Heart right ventricle (tissue), 16 donors: ENCODE measurements at regions of chr7 and their contacts with region 1.

Region 1: DNA sequence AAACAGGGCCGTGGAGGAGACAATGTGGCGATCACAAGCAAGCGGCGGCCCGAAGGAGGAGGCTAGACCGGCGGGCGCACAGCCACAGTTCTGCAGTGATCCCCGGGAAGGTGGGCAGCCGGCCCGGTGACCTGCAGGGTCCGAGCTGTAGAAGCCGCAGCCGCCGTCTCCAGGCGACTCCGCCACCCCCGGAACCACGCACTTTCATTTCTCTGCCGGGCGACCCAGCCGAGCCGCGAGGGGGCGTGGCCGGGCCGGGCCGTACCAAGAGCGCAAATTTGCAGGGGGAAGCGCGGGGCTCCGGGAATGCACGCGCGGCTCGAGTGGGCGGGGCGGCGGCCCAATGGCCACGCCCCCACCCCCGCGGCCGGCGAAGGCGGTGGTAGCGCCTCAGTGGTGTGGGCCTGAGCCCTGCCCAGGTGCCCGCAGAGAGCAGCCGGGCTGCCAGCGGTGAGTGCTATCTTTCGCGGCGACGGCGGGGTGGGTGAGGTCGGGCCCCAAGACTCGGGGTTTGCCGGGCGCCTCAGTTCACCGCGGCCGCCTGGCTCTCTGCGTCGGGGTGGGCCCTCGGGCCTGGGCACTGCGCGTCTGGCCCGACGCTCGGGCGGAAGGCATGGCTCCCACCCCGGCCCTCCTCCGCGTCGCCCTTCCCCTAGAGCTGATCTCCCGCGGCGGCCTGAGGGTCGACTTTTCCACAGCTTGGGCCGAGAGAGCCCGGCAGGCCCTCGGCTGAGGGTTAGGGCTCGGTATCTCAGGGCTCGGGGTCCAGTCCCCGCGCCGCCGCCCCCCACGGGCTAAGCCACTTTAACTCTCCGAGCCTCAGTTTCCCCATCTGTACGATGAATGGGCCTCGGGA is at the start of gene POR:
- DNase-seq: peak; percentile 95 to 97
- ATAC-seq: peak; percentile 98 to 100 (median 99)
- H3K4me3 ChIP-seq: peak within 1 kb of the TSS; percentile 88 to 100 (median 96)
- H3K27ac ChIP-seq: peak within 1 kb of the TSS; percentile 80 to 98 (median 94)
- H3K4me1 ChIP-seq: peaks cover 9 to 47% (median 37%) of the 10 kb centered on the region in 9 donors
- H3K27me3 ChIP-seq: no peaks in the 10 kb centered on the region
- CTCF ChIP-seq: peak in 5 of 9 donors; percentile 16 to 39 (median 32)
- total RNA-seq, gene POR: 37.3 to 203 (median 59.3) TPM

Region 2: GRCh38 chr7:75878769-75879611 is 36.0 kb before region 1 on chr7 and contains the start of gene RHBDD2:
- intact Hi-C with region 1: loop called in 3 of 10 experiments (anchors 2 kb)
- DNase-seq: peak; percentile 96 to 97
- ATAC-seq: peak; percentile 98 to 99 (median 99)
- H3K4me3 ChIP-seq: peak within 1 kb of the TSS; percentile 61 to 97 (median 78)
- H3K27ac ChIP-seq: peak within 1 kb of the TSS; percentile 47 to 91 (median 84)
- H3K4me1 ChIP-seq: peaks cover 5 to 52% (median 19%) of the 10 kb centered on the region in 9 donors
- H3K27me3 ChIP-seq: no peaks in the 10 kb centered on the region
- CTCF ChIP-seq: peak in 5 of 9 donors; percentile 26 to 53 (median 33)
- total RNA-seq, gene RHBDD2: 20.8 to 39.7 (median 27.4) TPM

Region 3: DNA sequence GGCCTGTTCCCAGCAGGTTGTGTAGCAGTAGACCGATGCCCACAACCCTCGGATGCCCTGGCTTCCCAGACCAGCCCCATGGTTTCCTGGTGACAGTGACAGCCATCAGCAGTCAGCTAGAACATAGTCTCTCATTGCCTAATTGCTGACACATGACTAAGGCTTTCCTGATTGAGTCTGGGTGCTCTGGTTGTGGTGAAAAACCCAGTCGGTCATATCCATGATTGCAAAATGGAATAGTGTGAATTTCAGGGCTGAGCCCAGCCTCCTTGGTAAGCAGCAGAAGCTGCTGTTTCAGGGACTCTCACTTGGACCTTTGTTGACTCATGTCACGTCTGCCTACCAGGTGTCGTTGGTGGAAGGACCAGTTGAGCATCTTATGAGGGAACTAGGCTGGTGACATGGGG is 36.6 kb after region 1 on chr7:
- intact Hi-C with region 1: loop called in 1 of 10 experiments (anchors 5 kb)
- DNase-seq: no peak
- ATAC-seq: peak; percentile 45 to 85 (median 74)
- H3K4me3 ChIP-seq: no peak overlapping the region
- H3K27ac ChIP-seq: peak overlapping the region in 9 of 10 donors; percentile 8 to 85 (median 76)
- H3K4me1 ChIP-seq: peaks cover 0 to 56% (median 19%) of the 10 kb centered on the region in 9 donors
- H3K27me3 ChIP-seq: no peaks in the 10 kb centered on the region
- CTCF ChIP-seq: no peak

Region 4: GRCh38 chr7:75966190-75966961 is 51.4 kb after region 1 on chr7:
- intact Hi-C with region 1: loop called in 7 of 10 experiments (anchors 5 kb)
- DNase-seq: peak; percentile 52 to 80
- ATAC-seq: peak; percentile 46 to 78 (median 67)
- H3K4me3 ChIP-seq: peak overlapping the region in 4 of 10 donors; percentile 4 to 31 (median 14)
- H3K27ac ChIP-seq: peak overlapping the region; percentile 70 to 95 (median 82)
- H3K4me1 ChIP-seq: peaks cover 36 to 97% (median 78%) of the 10 kb centered on the region in 9 donors
- H3K27me3 ChIP-seq: no peaks in the 10 kb centered on the region
- CTCF ChIP-seq: no peak